Activated CD4-positive, alpha-beta T cell treated with anti-CD3 and anti-CD28 coated beads, Interleukin-2, amount 10 ng/mL, durations not matched to agents 24 days and 14 days (primary cell): ENCODE measurements at regions of chr1 and their contacts with region 1.

Region 1: DNA sequence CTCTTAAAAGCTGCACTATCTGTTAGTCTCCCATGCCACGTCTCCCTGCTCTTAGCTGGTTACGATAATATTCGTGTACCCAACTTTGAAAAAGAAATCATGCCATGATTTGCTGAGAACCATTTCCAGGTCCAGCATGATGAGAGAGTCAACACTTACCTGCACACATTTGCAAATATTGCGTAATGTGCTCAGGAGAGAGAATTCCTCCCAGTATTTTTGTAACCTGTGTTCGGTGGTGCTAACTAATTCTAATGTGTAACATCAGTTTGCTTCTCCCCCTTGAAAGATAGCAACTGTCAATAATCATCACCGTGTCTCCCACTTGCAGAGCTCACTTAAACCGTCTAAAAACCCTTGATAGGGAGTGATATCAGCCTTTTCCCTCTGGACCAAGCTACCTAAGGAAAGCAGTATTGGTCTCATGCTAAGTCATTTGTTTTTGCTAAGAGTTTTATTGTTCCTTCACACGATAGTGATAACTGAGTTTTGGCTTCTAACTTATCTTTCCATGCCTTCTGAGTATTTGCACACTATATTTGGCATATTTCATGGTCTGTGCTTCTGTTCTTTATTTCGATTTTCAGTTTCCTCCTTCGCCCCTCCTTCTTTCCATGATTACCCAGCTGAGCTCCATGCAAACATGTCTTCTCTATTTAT is 61.1 kb upstream of the IRF2BP2 start:
- DNase-seq: peak; percentile 46
- H3K4me3 Mint-ChIP-seq: no peak overlapping the region
- H3K27ac Mint-ChIP-seq: no peak overlapping the region
- H3K4me1 Mint-ChIP-seq: peaks cover 11% of the 10 kb centered on the region
- H3K27me3 Mint-ChIP-seq: no peaks in the 10 kb centered on the region

Region 2: GRCh38 chr1:234361102-234361603 is 309.9 kb before region 1 on chr1:
- intact Hi-C with region 1: no loop called
- DNase-seq: no peak
- H3K4me3 Mint-ChIP-seq: no peak overlapping the region
- H3K27ac Mint-ChIP-seq: no peak overlapping the region
- H3K4me1 Mint-ChIP-seq: peaks cover 15% of the 10 kb centered on the region
- H3K27me3 Mint-ChIP-seq: peaks cover 2% of the 10 kb centered on the region

Region 3: DNA sequence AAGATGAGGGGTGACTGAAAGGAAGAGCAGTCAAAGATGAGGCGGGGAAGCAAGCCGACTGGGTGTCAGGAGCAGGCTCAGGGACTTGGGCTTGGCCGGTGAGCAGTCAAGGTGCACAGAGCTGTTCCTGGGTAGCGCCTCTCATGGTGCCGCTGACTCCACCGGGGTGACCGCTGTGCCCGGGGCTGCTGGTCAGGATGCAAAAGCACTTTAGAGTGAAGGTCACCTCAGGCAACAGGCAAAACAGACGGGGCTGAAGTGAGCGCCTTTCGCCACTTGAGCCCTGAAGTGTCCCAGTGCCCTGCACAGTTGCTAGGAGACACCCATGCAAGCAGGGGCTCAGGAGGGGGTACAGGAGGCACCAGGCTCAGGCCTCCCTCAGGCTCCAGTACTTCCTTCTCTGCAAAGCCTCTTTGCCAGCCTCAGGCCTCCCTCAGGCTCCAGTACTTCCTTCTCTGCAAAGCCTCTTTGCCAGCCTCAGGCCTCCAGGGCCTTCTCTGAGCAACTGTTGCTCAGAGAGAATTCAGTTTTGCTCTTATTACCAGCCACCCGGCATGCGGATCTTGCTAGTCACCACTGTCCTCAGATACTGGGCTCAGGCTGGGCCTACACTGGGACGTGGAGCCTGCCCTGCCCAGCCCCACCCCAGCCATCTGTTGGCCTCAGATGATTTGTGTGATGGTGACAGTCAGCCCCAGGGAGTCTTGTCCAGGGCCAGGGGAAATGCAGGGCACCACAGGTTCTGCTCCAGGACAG is 38.6 kb after region 1 on chr1:
- intact Hi-C with region 1: loop called (anchors 5 kb)
- DNase-seq: no peak
- H3K4me3 Mint-ChIP-seq: no peak overlapping the region
- H3K27ac Mint-ChIP-seq: peak overlapping the region; percentile 42
- H3K4me1 Mint-ChIP-seq: peaks cover 13% of the 10 kb centered on the region
- H3K27me3 Mint-ChIP-seq: no peaks in the 10 kb centered on the region